Activated CD4-positive, alpha-beta memory T cell treated with anti-CD3 and anti-CD28 coated beads, Interleukin-2, amount 10 ng/mL, durations not matched to agents 7 days and 5 days (primary cell): ENCODE measurements at regions of chr10 and their contacts with region 1.

Region 1: GRCh38 chr10:102009801-102010425 is 46.1 kb downstream of the ARMH3 start:
- DNase-seq: peak; percentile 42
- H3K4me3 Mint-ChIP-seq: no peak overlapping the region
- H3K27ac Mint-ChIP-seq: no peak overlapping the region
- H3K4me1 Mint-ChIP-seq: no peaks in the 10 kb centered on the region
- H3K27me3 Mint-ChIP-seq: no peaks in the 10 kb centered on the region

Region 2: DNA sequence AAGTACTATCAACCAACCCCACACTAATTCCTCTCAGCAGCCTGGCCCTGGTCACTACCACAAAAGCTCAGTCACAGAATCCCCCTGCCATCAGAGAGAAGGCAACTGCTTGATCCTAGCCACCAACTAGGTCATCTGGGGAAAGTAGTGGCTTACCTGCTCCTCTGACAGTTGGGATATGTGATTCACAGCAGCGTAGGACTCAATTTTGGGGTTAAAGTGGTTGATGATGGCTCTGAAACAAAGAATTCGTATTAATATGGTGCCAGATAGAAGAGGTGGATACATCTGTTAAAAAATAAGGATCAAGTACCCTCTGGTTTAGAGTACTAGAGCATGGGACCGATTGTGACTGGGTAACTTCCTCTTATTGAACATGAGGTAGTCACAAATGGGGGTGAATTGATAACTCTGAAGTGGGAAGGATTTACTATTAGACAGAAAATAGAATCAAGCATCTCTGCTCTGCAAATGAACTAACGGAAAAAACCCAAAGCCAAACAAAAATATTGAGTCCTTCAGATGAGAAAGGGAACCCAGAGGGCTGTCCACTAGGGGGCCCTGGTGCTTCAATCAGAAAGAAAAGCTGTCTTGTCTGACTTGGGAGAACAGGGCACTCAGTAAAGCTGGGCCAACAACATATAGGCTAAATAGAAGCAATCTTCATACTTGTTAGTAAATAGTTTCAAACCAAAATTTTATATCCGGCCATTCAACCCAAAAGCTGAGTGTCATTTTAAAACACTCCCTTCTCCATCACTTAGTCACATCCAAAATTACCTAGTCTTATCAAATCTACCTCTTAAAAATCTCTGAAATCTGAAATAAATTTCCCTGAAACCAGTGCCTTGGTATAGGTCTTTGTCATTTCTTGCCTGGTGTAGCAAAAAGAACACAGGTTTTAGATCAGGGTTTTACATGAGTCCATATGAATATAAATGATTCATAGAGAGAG is 120.4 kb before region 1 on chr10:
- CTCF ChIA-PET with region 1: interaction called, 74 read pairs
- POLR2A ChIA-PET with region 1: no interaction called
- DNase-seq: peak; percentile 74
- H3K4me3 Mint-ChIP-seq: no peak overlapping the region
- H3K27ac Mint-ChIP-seq: no peak overlapping the region
- H3K4me1 Mint-ChIP-seq: peaks cover 14% of the 10 kb centered on the region
- H3K27me3 Mint-ChIP-seq: no peaks in the 10 kb centered on the region

Region 3: GRCh38 chr10:102024799-102025198 is 14.9 kb after region 1 on chr10:
- CTCF ChIA-PET with region 1: interaction called, 13 read pairs
- POLR2A ChIA-PET with region 1: no interaction called
- DNase-seq: no peak
- H3K4me3 Mint-ChIP-seq: no peak overlapping the region
- H3K27ac Mint-ChIP-seq: no peak overlapping the region
- H3K4me1 Mint-ChIP-seq: peaks cover 2% of the 10 kb centered on the region
- H3K27me3 Mint-ChIP-seq: no peaks in the 10 kb centered on the region

Region 4: GRCh38 chr10:102175415-102175814 is 165.5 kb after region 1 on chr10:
- CTCF ChIA-PET with region 1: no interaction called
- POLR2A ChIA-PET with region 1: no interaction called
- DNase-seq: no peak
- H3K4me3 Mint-ChIP-seq: no peak overlapping the region
- H3K27ac Mint-ChIP-seq: no peak overlapping the region
- H3K4me1 Mint-ChIP-seq: peaks cover 2% of the 10 kb centered on the region
- H3K27me3 Mint-ChIP-seq: peaks cover 12% of the 10 kb centered on the region

Region 5: DNA sequence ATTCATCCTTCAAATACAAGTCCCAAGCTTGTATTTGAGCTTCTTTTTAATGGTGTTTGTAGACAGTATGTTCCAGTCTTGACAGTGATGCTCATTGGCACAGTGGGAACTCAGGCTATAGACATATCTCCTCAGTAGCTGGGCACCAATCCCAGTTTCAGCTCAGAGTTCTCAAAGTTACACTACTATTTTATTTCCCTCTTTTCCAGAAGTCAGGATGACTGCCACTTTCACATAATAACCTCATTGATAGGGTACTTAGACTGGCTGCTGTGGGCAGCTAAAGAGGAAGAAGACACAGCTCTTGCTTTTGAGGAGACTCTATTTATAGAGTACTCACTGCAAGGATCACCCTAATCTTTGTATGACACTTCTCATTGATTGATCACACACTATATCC is 237.8 kb after region 1 on chr10:
- CTCF ChIA-PET with region 1: no interaction called
- POLR2A ChIA-PET with region 1: no interaction called
- DNase-seq: no peak
- H3K4me3 Mint-ChIP-seq: no peak overlapping the region
- H3K27ac Mint-ChIP-seq: no peak overlapping the region
- H3K4me1 Mint-ChIP-seq: peaks cover 42% of the 10 kb centered on the region
- H3K27me3 Mint-ChIP-seq: no peaks in the 10 kb centered on the region